ENCODE measurements at regions of chr5 and their contacts with region 1.

Region 1: GRCh38 chr5:33997331-33997983 is 10.4 kb downstream of the AMACR start:
- DNase-seq: peak; percentile 41
- H3K4me3 Mint-ChIP-seq: no peak overlapping the region
- H3K27ac Mint-ChIP-seq: no peak overlapping the region
- H3K4me1 Mint-ChIP-seq: peaks cover 7% of the 10 kb centered on the region
- H3K27me3 Mint-ChIP-seq: no peaks in the 10 kb centered on the region

Region 2: DNA sequence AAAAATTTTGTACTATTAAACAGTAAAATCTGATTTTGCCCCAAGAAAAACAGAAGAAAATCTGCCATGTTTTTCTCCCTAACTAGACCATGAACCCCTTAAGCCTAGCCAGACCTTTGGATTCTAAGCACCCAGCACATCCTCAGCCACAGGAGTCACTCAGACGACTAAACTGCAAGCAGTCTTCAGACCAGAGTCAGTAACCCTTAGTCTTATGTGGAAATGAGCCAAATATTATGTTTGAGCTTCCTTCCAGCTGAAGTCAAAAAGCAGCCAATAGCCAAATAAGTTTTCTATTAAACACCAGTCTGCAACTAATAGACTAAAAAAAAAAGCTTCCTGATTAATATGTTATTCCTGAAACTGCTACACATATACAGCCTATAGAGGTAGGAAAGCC is 1870.8 kb before region 1 on chr5:
- CTCF ChIA-PET with region 1: no interaction called
- intact Hi-C with region 1: no loop called
- DNase-seq: no peak
- H3K4me3 Mint-ChIP-seq: no peak overlapping the region
- H3K27ac Mint-ChIP-seq: no peak overlapping the region
- H3K4me1 Mint-ChIP-seq: peaks cover 22% of the 10 kb centered on the region
- H3K27me3 Mint-ChIP-seq: no peaks in the 10 kb centered on the region

Region 3: GRCh38 chr5:32869216-32869615 is 1128.2 kb before region 1 on chr5:
- CTCF ChIA-PET with region 1: no interaction called
- intact Hi-C with region 1: no loop called
- DNase-seq: no peak
- H3K4me3 Mint-ChIP-seq: no peak overlapping the region
- H3K27ac Mint-ChIP-seq: no peak overlapping the region
- H3K4me1 Mint-ChIP-seq: no peaks in the 10 kb centered on the region
- H3K27me3 Mint-ChIP-seq: no peaks in the 10 kb centered on the region

Region 4: GRCh38 chr5:33641744-33642505 is 355.5 kb before region 1 on chr5:
- CTCF ChIA-PET with region 1: no interaction called
- intact Hi-C with region 1: no loop called
- DNase-seq: no peak
- H3K4me3 Mint-ChIP-seq: no peak overlapping the region
- H3K27ac Mint-ChIP-seq: no peak overlapping the region
- H3K4me1 Mint-ChIP-seq: peaks cover 10% of the 10 kb centered on the region
- H3K27me3 Mint-ChIP-seq: peaks cover 3% of the 10 kb centered on the region

Region 5: DNA sequence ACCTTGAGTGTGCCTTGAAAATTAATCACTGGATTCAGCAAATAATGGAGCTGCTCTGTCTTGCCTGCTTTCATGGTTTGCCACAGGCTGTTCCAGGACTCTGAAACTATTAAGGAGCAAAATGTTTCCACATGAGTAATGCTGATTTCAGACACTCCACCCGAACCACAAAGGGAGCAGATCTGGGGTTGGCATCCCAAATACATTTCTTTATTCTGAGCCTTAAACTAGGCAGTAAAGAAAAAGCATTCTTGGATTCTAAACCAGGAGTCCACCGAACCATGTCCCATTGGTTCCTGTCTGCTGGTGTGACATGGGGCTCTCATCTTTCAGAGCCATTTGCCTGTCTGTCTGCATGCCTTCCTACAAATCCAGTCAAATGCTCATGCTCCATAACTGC is 55.7 kb after region 1 on chr5:
- CTCF ChIA-PET with region 1: no interaction called
- intact Hi-C with region 1: no loop called
- DNase-seq: no peak
- H3K4me3 Mint-ChIP-seq: no peak overlapping the region
- H3K27ac Mint-ChIP-seq: no peak overlapping the region
- H3K4me1 Mint-ChIP-seq: no peaks in the 10 kb centered on the region
- H3K27me3 Mint-ChIP-seq: no peaks in the 10 kb centered on the region

Region 6: GRCh38 chr5:34459908-34460307 is 462.5 kb after region 1 on chr5:
- CTCF ChIA-PET with region 1: interaction called, 4 read pairs
- intact Hi-C with region 1: loop called (anchors 1 kb)
- DNase-seq: no peak
- H3K4me3 Mint-ChIP-seq: no peak overlapping the region
- H3K27ac Mint-ChIP-seq: no peak overlapping the region
- H3K4me1 Mint-ChIP-seq: peaks cover under 1% of the 10 kb centered on the region
- H3K27me3 Mint-ChIP-seq: peaks cover 4% of the 10 kb centered on the region